ENCODE measurements at regions of chr1 and their contacts with region 1.

Region 1: DNA sequence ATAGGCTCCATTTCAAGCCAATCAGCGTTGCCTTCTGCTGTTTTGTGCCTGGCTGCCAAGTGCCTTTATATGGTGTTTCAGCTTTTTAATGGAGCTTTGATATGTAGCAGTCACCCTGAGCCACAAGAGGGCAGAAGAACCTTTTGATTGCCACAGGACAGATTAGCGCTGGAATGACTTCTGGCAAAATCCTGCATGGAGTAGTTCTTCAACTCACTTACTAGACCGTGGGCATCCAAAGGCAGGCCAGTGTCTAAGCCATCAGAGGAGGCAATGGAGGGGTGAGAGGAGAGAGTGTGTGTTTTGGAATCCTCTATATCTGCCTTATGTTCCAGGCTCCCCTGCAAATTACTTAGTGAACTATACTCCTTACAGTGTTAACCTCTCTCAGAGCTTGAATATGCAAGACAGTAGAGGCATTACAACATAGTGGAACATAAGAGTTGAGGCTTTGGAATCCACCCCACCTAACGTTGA is 56.2 kb downstream of the ST3GAL3 start:
- DNase-seq: peak; percentile 89
- H3K4me3 ChIP-seq: no peak overlapping the region
- H3K27ac ChIP-seq: no peak overlapping the region
- H3K4me1 ChIP-seq: peaks cover 6% of the 10 kb centered on the region
- H3K27me3 ChIP-seq: no peaks in the 10 kb centered on the region
- CTCF ChIP-seq: peak; percentile 78 to 86
- POLR2A ChIP-seq: no peak

Region 2: DNA sequence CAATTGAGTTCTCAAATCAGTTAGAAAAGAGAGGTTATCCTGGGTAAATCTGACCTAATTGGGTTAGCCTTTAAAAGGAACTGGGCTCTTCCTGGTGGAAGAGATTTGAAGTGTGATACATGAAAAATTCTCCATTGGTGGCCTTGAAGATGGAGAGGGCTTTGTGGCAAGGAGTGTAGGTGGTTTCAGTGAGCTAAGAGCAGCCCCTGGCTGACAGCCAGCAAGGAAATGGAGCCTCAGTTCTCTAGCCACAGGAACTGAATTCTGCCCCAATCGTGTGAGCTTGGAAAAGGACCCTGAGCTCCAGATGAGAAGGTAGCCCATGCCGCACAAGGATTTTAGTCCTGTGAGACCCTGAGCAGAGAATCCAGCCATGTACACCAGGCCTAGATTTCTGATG is 297.1 kb before region 1 on chr1:
- CTCF ChIA-PET with region 1: no interaction called
- POLR2A ChIA-PET with region 1: no interaction called
- dilution Hi-C with region 1: no loop called
- intact Hi-C with region 1: no loop called
- DNase-seq: no peak
- H3K4me3 ChIP-seq: no peak overlapping the region
- H3K27ac ChIP-seq: no peak overlapping the region
- H3K4me1 ChIP-seq: peaks cover 16% of the 10 kb centered on the region
- H3K27me3 ChIP-seq: no peaks in the 10 kb centered on the region
- CTCF ChIP-seq: no peak
- POLR2A ChIP-seq: no peak

Region 3: DNA sequence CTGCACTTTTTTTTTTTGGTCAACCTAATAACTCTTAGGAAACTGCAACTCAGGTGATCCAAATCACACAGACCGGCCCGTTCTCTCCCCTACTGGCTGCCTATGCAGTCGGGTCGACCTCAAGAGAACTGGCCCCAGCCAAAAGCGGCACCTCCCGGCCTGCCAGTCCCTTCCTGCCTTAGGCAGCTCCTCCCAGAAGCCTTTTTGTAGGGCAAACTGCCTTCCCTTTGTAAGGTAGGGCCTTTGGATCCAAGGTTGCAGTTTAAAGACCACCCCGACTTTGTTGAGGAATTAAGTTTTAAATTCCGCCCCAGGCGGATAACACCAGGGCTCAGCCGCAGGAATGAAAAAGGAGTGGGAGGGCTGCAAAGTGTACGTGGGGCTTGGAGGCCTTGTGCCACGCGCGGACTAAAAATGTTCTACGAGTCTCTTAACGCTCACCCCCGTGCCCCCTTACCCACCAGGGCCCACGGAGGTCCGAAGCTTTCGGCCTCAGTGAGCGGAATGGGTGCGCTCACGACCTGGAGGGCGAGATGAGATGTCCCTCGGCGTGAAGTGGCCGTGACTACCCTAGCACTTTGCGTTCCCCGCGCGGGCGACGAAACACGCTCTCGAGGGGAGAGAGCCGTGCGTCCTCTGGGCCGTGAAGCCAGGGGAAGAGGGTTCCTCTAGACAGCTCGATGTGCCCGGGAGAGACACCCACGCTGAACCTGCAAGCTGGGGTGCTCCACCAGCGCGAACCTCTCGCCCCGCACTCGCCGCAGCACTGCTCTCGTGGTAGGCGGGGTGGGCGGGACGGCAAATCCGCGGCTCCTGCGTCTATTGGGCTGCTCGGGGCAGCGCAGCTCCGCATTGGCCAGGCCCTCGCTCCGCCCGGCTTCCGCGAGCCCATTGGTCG is 56.7 kb before region 1 on chr1:
- CTCF ChIA-PET with region 1: interaction called, 9 read pairs
- POLR2A ChIA-PET with region 1: no interaction called
- dilution Hi-C with region 1: no loop called
- intact Hi-C with region 1: loop called (anchors 2 kb)
- DNase-seq: peak; percentile 92
- H3K4me3 ChIP-seq: peak overlapping the region in 2 of 3 experiments; percentile 36 to 56
- H3K27ac ChIP-seq: no peak overlapping the region
- H3K4me1 ChIP-seq: peaks cover 36% of the 10 kb centered on the region
- H3K27me3 ChIP-seq: no peaks in the 10 kb centered on the region
- CTCF ChIP-seq: no peak
- POLR2A ChIP-seq: peak; percentile 93

Region 4: DNA sequence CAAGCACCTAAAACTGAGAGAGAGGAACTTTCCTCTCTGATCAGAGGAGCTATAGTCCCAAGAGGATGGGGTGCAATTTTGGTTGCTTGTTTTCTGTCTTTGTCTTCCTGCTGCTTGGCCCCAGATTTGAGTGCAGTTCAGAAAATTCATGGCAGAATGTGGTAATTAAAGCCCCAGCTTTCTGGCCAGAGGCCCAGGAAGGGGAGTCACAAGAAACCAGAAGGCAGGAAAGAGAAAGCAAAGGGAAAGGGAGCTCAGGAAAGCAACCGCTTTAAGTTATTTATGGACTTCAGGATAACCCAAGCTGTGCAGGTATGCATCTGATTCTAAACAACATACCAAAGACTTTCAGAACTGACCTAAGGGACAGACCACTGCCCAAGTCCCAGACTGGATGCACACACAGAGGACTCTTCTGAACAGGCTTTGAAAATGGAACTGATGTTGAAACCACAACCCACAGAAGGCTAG is 32.6 kb after region 1 on chr1:
- CTCF ChIA-PET with region 1: interaction called, 11 read pairs
- POLR2A ChIA-PET with region 1: no interaction called
- dilution Hi-C with region 1: no loop called
- intact Hi-C with region 1: no loop called
- DNase-seq: no peak
- H3K4me3 ChIP-seq: no peak overlapping the region
- H3K27ac ChIP-seq: no peak overlapping the region
- H3K4me1 ChIP-seq: no peaks in the 10 kb centered on the region
- H3K27me3 ChIP-seq: no peaks in the 10 kb centered on the region
- CTCF ChIP-seq: no peak
- POLR2A ChIP-seq: no peak

Region 5: GRCh38 chr1:43861337-43861736 is 97.8 kb after region 1 on chr1:
- CTCF ChIA-PET with region 1: interaction called, 18 read pairs
- POLR2A ChIA-PET with region 1: no interaction called
- dilution Hi-C with region 1: no loop called
- intact Hi-C with region 1: no loop called
- DNase-seq: peak; percentile 69
- H3K4me3 ChIP-seq: no peak overlapping the region
- H3K27ac ChIP-seq: no peak overlapping the region
- H3K4me1 ChIP-seq: peaks cover 8% of the 10 kb centered on the region
- H3K27me3 ChIP-seq: no peaks in the 10 kb centered on the region
- CTCF ChIP-seq: no peak
- POLR2A ChIP-seq: no peak

Region 6: GRCh38 chr1:43924516-43924915 is 161.0 kb after region 1 on chr1:
- CTCF ChIA-PET with region 1: interaction called, 965 read pairs
- POLR2A ChIA-PET with region 1: no interaction called
- dilution Hi-C with region 1: loop called (anchors 25 kb)
- intact Hi-C with region 1: no loop called
- DNase-seq: no peak
- H3K4me3 ChIP-seq: no peak overlapping the region
- H3K27ac ChIP-seq: no peak overlapping the region
- H3K4me1 ChIP-seq: no peaks in the 10 kb centered on the region
- H3K27me3 ChIP-seq: no peaks in the 10 kb centered on the region
- CTCF ChIP-seq: no peak
- POLR2A ChIP-seq: no peak

Region 7: DNA sequence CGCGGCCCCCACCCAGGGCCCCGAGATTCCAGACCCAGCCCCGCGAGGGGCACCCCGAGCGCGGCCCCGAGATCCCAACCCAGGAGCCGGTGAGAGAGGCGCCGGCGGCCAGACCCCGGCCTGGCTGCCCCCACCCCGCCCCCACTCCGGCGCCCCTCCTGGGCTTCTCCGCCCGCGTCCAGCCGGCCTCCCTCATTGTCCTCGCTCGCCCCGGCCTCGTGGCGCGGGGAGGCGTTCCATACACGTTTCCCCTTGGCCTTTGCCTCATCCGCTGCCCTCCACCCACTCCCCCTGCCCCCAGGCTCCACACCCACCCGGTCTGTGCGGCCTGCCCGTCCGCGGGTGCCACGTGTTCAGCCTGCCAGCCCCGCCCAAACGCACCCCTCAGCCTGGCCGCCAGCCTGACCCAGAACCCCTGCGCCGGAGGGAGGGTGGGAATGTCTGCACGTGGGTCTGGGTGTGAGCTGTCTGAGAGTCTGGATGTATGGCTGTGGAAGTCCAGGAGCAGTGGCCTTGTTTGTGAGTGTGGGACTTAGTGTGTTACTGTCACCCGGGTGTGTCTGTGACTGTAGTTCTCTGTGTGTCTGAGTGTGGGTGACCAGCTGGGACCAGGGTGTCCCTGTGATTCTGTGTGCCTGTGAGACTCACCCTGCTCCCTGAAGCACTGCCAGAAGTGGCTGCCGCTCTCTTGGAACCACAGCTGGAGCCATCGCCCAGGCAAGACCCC is 216.2 kb after region 1 on chr1:
- CTCF ChIA-PET with region 1: interaction called, 11 read pairs
- POLR2A ChIA-PET with region 1: no interaction called
- dilution Hi-C with region 1: no loop called
- intact Hi-C with region 1: no loop called
- DNase-seq: peak; percentile 47
- H3K4me3 ChIP-seq: peak overlapping the region; percentile 46 to 66 (median 50)
- H3K27ac ChIP-seq: peak overlapping the region; percentile 13
- H3K4me1 ChIP-seq: peaks cover 27% of the 10 kb centered on the region
- H3K27me3 ChIP-seq: no peaks in the 10 kb centered on the region
- CTCF ChIP-seq: no peak
- POLR2A ChIP-seq: no peak

Region 8: DNA sequence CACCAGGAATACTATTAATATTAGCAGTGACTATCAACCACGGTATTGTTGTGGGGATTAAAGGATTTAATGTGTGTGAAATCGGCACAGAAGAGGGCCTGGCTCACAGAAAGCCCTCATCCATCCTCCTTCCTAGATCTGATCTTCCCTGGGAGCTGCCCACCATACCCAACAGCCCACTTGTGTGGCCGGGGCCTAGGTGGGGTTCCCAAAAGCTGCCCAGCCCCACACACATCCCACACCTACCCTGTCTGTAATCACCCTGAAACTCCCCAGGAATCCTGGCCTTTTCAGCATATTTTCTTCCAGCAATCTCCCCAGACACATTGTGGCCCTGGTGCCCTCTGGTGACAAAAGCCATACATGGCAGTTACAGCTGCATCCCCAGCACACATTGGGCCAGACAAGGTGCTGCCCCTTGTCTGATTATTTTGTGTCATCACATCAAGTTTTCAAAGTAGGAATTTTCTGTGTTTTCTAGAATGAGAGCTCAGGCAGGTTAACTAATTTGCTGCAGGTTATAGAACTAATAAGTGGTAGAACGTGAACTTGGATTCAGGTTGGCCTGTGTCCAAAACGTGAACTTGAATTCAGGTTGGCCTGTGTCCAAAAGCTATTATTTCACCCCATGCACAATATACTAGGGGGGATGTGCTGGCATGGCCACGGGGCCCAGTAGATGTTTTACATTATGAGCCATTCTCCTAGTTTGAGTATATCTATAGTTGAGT is 273.0 kb after region 1 on chr1:
- CTCF ChIA-PET with region 1: interaction called, 32 read pairs
- POLR2A ChIA-PET with region 1: no interaction called
- dilution Hi-C with region 1: no loop called
- intact Hi-C with region 1: loop called (anchors 2 kb)
- DNase-seq: peak; percentile 84
- H3K4me3 ChIP-seq: no peak overlapping the region
- H3K27ac ChIP-seq: no peak overlapping the region
- H3K4me1 ChIP-seq: no peaks in the 10 kb centered on the region
- H3K27me3 ChIP-seq: peaks cover 0 to 5% of the 10 kb centered on the region in 2 experiments
- CTCF ChIP-seq: peak; percentile 70 to 78
- POLR2A ChIP-seq: no peak